ENCODE measurements at regions of chr1 and their contacts with region 1.

Region 1: DNA sequence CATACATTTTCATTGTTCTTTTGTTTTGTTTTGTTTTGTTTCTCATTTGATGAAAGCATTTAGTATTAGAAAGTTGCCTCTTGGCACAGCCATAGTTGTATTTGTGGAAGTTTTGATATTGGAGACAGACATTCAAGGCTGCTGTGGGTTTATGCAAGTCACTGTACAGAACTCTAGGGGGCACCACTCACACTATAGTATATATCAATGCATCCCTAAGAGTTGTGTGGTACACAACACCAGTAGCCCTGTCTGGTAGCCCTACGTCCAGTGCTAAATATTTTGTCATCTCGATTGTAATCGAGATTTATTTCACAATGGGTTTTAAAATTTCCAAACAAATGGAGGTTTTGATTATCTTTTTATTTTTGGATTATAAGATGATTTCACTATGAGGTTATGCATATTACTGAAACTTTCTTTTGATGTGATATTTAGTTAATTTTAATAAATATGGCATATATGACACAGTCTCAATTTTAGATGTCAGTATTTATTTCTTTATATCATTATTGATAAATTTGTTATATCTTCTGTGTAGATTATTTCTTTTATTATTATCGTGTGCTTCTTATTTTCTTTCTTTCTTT is 112.2 kb downstream of the NR5A2 start:
- DNase-seq: peak in 4 of 5 donors; percentile 35 to 47 (median 40)
- H3K4me3 ChIP-seq: no peak overlapping the region
- H3K4me3 Mint-ChIP-seq: no peak overlapping the region
- H3K27ac ChIP-seq: no peak overlapping the region
- H3K27ac Mint-ChIP-seq: no peak overlapping the region
- H3K4me1 ChIP-seq: no peaks in the 10 kb centered on the region
- H3K4me1 Mint-ChIP-seq: peaks cover 0 to 5% (median 0%) of the 10 kb centered on the region in 4 donors
- H3K27me3 ChIP-seq: no peaks in the 10 kb centered on the region
- H3K27me3 Mint-ChIP-seq: no peaks in the 10 kb centered on the region

Region 2: GRCh38 chr1:200128944-200129885 is 10.5 kb before region 1 on chr1:
- CTCF ChIA-PET with region 1: interaction called, 10 read pairs
- POLR2A ChIA-PET with region 1: no interaction called
- intact Hi-C with region 1: no loop called
- DNase-seq: peak; percentile 32 to 68 (median 38)
- H3K4me3 ChIP-seq: no peak overlapping the region
- H3K4me3 Mint-ChIP-seq: peak overlapping the region in 2 of 8 donors; percentile 6 to 57
- H3K27ac ChIP-seq: no peak overlapping the region
- H3K27ac Mint-ChIP-seq: peak overlapping the region in 5 of 7 donors; percentile 60 to 94 (median 75)
- H3K4me1 ChIP-seq: peaks cover 19% of the 10 kb centered on the region
- H3K4me1 Mint-ChIP-seq: peaks cover 14 to 19% (median 17%) of the 10 kb centered on the region in 4 donors
- H3K27me3 ChIP-seq: no peaks in the 10 kb centered on the region
- H3K27me3 Mint-ChIP-seq: no peaks in the 10 kb centered on the region

Region 3: GRCh38 chr1:200279810-200280411 is 140.2 kb after region 1 on chr1:
- CTCF ChIA-PET with region 1: interaction called, 10 read pairs
- POLR2A ChIA-PET with region 1: no interaction called
- intact Hi-C with region 1: loop called (anchors 1 kb)
- DNase-seq: peak in 4 of 5 donors; percentile 3 to 24 (median 14)
- H3K4me3 ChIP-seq: no peak overlapping the region
- H3K4me3 Mint-ChIP-seq: no peak overlapping the region
- H3K27ac ChIP-seq: no peak overlapping the region
- H3K27ac Mint-ChIP-seq: no peak overlapping the region
- H3K4me1 ChIP-seq: no peaks in the 10 kb centered on the region
- H3K4me1 Mint-ChIP-seq: no peaks in the 10 kb centered on the region
- H3K27me3 ChIP-seq: no peaks in the 10 kb centered on the region
- H3K27me3 Mint-ChIP-seq: peaks cover 3 to 4% of the 10 kb centered on the region in 2 donors

Region 4: DNA sequence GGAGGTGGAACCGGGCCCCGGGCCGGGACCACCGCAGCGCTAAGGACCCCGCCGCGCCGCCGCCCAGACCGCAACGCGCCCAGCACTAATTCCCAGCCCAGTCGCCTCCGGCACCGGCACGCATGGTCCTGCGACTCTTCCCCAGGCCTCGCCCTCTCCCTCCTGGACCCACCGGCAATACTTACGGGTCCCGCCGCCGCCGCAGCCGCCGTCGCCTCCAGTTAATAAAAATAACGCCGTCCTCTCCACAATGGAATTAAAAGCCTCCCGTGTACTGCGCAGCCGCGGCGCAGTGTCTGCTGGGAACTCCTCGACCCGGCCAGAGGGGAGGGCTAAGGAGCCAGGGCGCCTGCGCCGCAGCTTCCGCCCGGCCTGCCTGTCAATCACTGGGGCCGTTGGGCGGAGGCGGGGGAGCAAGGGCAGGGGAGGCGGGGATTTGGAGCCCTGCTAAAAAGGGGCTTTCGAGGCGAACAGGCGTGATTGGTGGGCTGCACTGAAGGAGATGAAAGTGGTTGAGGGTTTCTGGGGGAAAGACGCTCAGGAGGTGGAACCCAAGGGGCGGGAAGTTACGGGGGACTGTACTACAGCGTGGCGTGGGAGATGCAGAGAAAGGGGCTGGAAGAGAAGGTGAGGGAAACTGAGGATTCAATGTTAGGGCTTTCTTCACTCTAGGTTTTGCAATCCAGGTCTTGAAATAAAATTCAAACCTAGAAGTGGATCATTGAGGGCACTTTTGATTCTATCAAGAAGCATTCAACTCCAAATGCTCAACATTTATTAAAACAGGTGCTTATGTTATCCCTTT is 270.2 kb after region 1 on chr1 and contains the start of gene ZNF281:
- CTCF ChIA-PET with region 1: no interaction called
- POLR2A ChIA-PET with region 1: no interaction called
- intact Hi-C with region 1: loop called (anchors 5 kb)
- DNase-seq: peak; percentile 92 to 95 (median 94)
- H3K4me3 ChIP-seq: peak within 1 kb of the TSS; percentile 70 to 87
- H3K4me3 Mint-ChIP-seq: peak within 1 kb of the TSS; percentile 98 to 99 (median 99)
- H3K27ac ChIP-seq: peak within 1 kb of the TSS; percentile 88
- H3K27ac Mint-ChIP-seq: peak within 1 kb of the TSS; percentile 93 to 98 (median 96)
- H3K4me1 ChIP-seq: peaks cover 41% of the 10 kb centered on the region
- H3K4me1 Mint-ChIP-seq: peaks cover 39 to 57% (median 49%) of the 10 kb centered on the region in 4 donors
- H3K27me3 ChIP-seq: no peaks in the 10 kb centered on the region
- H3K27me3 Mint-ChIP-seq: no peaks in the 10 kb centered on the region
- total RNA-seq, gene ZNF281: 23.1 to 24.1 TPM

Region 5: GRCh38 chr1:200510228-200510623 is 370.5 kb after region 1 on chr1:
- CTCF ChIA-PET with region 1: interaction called, 6 read pairs
- POLR2A ChIA-PET with region 1: no interaction called
- intact Hi-C with region 1: loop called (anchors 1 kb)
- DNase-seq: peak; percentile 59 to 66 (median 63)
- H3K4me3 ChIP-seq: no peak overlapping the region
- H3K4me3 Mint-ChIP-seq: no peak overlapping the region
- H3K27ac ChIP-seq: no peak overlapping the region
- H3K27ac Mint-ChIP-seq: peak overlapping the region in 1 of 7 donors; percentile 37
- H3K4me1 ChIP-seq: no peaks in the 10 kb centered on the region
- H3K4me1 Mint-ChIP-seq: peaks cover 0 to 3% (median 0%) of the 10 kb centered on the region in 4 donors
- H3K27me3 ChIP-seq: no peaks in the 10 kb centered on the region
- H3K27me3 Mint-ChIP-seq: peaks cover 8 to 16% of the 10 kb centered on the region in 2 donors

Region 6: DNA sequence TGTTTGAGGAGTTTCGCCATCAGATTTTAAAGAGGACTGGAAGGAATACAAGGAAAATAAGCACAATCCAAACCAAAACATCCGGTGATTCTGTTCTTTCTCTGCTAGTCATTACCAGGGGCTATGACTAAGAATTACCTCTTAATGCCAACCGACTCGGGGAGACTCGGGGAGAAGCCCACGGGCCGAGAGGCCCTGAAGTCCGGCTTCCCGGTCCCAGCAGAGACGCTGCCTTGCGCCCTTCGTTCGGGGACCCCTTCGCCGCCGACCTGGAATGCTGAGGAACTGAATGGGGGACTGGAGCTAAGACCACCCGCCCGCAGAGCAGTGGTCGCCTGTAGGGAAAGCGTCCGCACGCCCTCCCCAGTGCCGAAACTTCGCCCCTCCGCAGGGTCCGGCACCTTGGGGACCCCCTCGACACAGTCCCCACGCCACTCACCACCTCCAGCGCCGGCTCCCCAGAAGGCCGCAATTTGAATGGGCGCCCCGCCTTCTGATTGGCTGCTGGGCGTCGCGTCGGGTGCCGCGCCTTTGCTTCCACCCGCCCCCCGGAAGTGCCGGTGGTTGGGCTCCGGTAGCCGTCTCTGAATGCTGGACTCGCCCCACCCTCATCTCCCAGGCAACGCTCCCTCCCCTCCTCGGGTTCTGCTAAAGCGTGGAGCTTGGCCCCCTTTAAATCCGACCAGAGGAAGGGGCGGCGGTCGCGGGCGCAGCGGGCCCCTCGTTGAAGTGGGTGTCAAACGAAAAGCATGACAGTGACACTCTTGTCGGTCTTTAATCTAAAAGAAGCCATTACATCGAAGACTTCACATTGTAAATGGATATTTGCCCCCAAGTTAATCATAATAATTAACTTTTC is 480.7 kb after region 1 on chr1 and contains the start of gene KIF14:
- CTCF ChIA-PET with region 1: no interaction called
- POLR2A ChIA-PET with region 1: no interaction called
- intact Hi-C with region 1: no loop called
- DNase-seq: peak; percentile 89 to 95 (median 91)
- H3K4me3 ChIP-seq: peak within 1 kb of the TSS; percentile 69 to 83
- H3K4me3 Mint-ChIP-seq: peak within 1 kb of the TSS; percentile 95 to 99 (median 98)
- H3K27ac ChIP-seq: peak within 1 kb of the TSS; percentile 39
- H3K27ac Mint-ChIP-seq: peak within 1 kb of the TSS; percentile 93 to 97 (median 96)
- H3K4me1 ChIP-seq: peaks cover 24% of the 10 kb centered on the region
- H3K4me1 Mint-ChIP-seq: peaks cover 6 to 23% (median 9%) of the 10 kb centered on the region in 4 donors
- H3K27me3 ChIP-seq: no peaks in the 10 kb centered on the region
- H3K27me3 Mint-ChIP-seq: no peaks in the 10 kb centered on the region
- total RNA-seq, gene KIF14: 0.06 TPM in 1 of 2 experiments, not detected in the other

Measured in CD4-positive, alpha-beta memory T cell (primary cell).